Activated naive CD4-positive, alpha-beta T cell treated with anti-CD3 and anti-CD28 coated beads for 36 hours (primary cell): ENCODE measurements at regions of chr1 and their contacts with region 1.

Region 1: GRCh38 chr1:200154069-200154767 is 126.7 kb downstream of the NR5A2 start:
- DNase-seq: peak; percentile 74
- H3K4me3 Mint-ChIP-seq: peak overlapping the region; percentile 10
- H3K27ac Mint-ChIP-seq: peak overlapping the region; percentile 87
- H3K4me1 Mint-ChIP-seq: peaks cover 45% of the 10 kb centered on the region
- H3K27me3 Mint-ChIP-seq: no peaks in the 10 kb centered on the region

Region 2: GRCh38 chr1:198937231-198938031 is 1216.8 kb before region 1 on chr1:
- CTCF ChIA-PET with region 1: no interaction called
- intact Hi-C with region 1: loop called (anchors 10 kb)
- DNase-seq: peak; percentile 72
- H3K4me3 Mint-ChIP-seq: peak overlapping the region; percentile 89
- H3K27ac Mint-ChIP-seq: peak overlapping the region; percentile 84
- H3K4me1 Mint-ChIP-seq: peaks cover 21% of the 10 kb centered on the region
- H3K27me3 Mint-ChIP-seq: no peaks in the 10 kb centered on the region

Region 3: DNA sequence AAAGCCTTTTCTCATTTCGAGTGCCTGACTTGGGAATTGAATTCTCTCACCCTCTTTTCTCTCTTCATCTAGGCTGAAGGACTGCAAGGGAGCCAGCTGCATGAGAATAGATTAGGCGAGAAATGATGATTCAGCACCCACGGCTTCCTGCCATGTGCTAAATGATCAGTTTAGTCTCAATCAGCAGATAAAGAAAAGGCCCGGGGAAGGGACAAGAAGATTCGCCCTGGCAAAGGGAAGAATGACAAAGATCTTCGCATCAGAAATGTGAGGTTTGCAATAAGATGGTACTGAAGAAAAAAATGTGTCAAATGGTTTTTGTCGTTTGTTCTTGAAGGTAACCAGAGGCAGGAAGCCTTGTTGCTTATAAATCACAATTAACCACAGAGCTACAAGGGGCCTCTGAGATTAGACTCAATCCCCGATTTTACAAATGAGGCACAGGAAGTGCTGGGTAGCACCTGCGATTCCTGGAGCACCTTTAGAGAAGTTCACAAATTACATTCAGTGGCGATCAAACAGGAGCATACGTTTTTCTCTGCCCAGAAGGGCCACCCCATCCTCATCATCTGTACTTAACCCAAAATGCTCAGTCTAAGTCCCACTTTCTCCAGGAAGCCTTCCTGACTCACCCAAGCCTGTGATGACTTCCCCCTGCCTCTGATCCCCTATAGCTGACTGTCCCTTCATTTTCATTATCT is 72.2 kb after region 1 on chr1:
- CTCF ChIA-PET with region 1: interaction called, 4 read pairs
- intact Hi-C with region 1: loop called (anchors 1 kb)
- DNase-seq: peak; percentile 70
- H3K4me3 Mint-ChIP-seq: peak overlapping the region; percentile 3
- H3K27ac Mint-ChIP-seq: peak overlapping the region; percentile 64
- H3K4me1 Mint-ChIP-seq: peaks cover 17% of the 10 kb centered on the region
- H3K27me3 Mint-ChIP-seq: peaks cover 4% of the 10 kb centered on the region

Region 4: GRCh38 chr1:200409761-200410565 is 255.7 kb after region 1 on chr1 and contains the start of gene ZNF281:
- CTCF ChIA-PET with region 1: no interaction called
- intact Hi-C with region 1: loop called (anchors 1 kb)
- DNase-seq: peak; percentile 96
- H3K4me3 Mint-ChIP-seq: peak within 1 kb of the TSS; percentile 96
- H3K27ac Mint-ChIP-seq: peak within 1 kb of the TSS; percentile 93
- H3K4me1 Mint-ChIP-seq: peaks cover 48% of the 10 kb centered on the region
- H3K27me3 Mint-ChIP-seq: no peaks in the 10 kb centered on the region
- total RNA-seq, gene ZNF281: 6.4 to 7.5 TPM

Region 5: DNA sequence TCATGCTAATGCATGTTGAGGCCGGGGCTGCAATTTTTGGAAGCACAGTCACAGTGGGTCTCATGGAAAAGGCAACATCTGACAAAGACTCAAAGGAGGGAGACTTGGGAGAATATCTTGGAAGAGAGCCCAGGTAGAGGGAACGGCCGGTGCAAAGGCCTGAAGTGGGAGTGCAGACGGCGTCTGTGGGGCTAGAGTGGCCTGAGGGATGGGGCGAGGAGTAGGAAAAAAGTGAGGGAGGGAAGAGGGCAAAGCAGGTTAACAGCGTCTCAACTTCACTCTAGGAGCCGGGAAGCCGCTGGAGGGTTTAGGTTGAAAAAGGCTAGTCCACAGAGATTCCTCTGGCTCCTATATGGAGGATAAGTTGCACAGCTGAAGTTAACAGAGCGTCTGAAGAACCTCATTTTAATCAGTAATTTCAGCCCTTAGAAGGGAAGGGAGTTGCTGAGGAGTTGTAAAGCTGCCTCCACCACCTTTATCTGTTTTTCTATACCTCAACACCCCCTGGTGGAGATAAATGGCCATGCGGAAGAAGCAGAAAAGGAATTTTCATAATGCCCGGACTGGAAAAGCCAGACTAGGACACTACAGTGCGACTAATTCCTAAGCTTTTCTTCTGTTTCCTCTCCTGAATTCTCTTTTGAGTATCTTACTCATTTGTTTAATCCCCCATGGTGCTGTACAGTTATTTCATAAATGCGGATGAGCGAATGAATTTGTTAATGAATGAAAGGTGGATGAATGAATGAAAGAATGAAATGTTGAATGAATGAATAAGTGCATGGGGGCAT is 334.4 kb after region 1 on chr1:
- CTCF ChIA-PET with region 1: no interaction called
- intact Hi-C with region 1: loop called (anchors 1 kb)
- DNase-seq: peak; percentile 63
- H3K4me3 Mint-ChIP-seq: no peak overlapping the region
- H3K27ac Mint-ChIP-seq: no peak overlapping the region
- H3K4me1 Mint-ChIP-seq: peaks cover 8% of the 10 kb centered on the region
- H3K27me3 Mint-ChIP-seq: peaks cover 11% of the 10 kb centered on the region

Region 6: DNA sequence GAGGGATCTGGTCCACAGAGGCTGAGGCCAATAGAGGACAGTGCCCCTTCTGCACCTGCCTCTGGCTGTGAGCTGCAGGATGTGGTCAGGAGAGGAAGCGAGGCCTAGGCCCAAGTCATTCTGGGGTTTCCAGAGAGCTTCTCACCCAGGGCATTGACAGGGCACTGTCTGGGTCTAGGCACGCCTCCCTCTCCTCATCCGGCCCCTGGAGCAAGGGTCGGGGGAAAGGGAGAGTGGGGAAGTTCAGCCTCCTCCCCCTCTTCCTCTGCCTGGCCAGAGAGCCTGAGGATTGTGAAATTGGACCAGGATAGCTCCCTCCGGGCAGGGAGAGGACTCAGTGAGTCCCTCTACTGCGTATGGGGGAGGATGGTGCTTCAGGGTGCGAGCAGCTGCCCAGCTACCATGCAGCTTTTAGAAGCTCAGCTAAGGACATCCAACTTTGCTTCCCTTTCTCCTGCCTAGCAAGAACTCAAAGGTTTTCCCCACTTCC is 734.2 kb after region 1 on chr1:
- CTCF ChIA-PET with region 1: no interaction called
- intact Hi-C with region 1: loop called (anchors 5 kb)
- DNase-seq: peak; percentile 85
- H3K4me3 Mint-ChIP-seq: no peak overlapping the region
- H3K27ac Mint-ChIP-seq: no peak overlapping the region
- H3K4me1 Mint-ChIP-seq: peaks cover 46% of the 10 kb centered on the region
- H3K27me3 Mint-ChIP-seq: peaks cover 25% of the 10 kb centered on the region